ENCODE measurements at regions of chr9 and their contacts with region 1.

Region 1: GRCh38 chr9:123349691-123350480 is 6.1 kb upstream of the CRB2 start:
- DNase-seq: no peak
- ATAC-seq: peak; percentile 79 to 92 (median 86)
- H3K4me3 ChIP-seq: no peak overlapping the region
- H3K27ac ChIP-seq: no peak overlapping the region
- H3K4me1 ChIP-seq: peaks cover 7% of the 10 kb centered on the region
- H3K27me3 ChIP-seq: peaks cover 0 to 3% (median 0%) of the 10 kb centered on the region in 3 donors
- CTCF ChIP-seq: peak; percentile 95

Region 2: DNA sequence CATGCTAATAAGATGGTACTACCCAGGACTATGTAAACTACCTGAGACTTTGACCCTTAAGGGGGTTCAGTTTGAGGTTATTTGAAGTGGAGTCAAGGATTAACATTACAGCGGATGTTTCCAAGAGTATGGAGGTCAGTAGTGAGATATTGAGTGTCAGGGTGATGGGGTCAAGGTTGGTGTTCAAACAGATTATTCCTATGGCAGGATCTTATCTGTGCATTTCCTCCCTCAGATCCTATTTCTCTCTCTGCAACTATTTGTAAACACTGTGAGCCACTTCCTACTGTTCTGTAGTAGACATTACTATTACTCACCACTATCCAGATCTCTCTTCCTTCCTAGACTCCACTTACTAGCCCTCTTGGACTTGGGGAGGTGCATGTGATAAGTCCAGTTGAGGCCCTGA is 1925.9 kb before region 1 on chr9:
- intact Hi-C with region 1: no loop called
- DNase-seq: no peak
- ATAC-seq: no peak
- H3K4me3 ChIP-seq: no peak overlapping the region
- H3K27ac ChIP-seq: no peak overlapping the region
- H3K4me1 ChIP-seq: no peaks in the 10 kb centered on the region
- H3K27me3 ChIP-seq: no peaks in the 10 kb centered on the region
- CTCF ChIP-seq: no peak

Region 3: GRCh38 chr9:123087359-123087888 is 262.5 kb before region 1 on chr9:
- intact Hi-C with region 1: loop called in 1 of 2 experiments (anchors 2 kb)
- DNase-seq: no peak
- ATAC-seq: peak; percentile 59 to 78 (median 70)
- H3K4me3 ChIP-seq: no peak overlapping the region
- H3K27ac ChIP-seq: no peak overlapping the region
- H3K4me1 ChIP-seq: no peaks in the 10 kb centered on the region
- H3K27me3 ChIP-seq: no peaks in the 10 kb centered on the region
- CTCF ChIP-seq: no peak

Region 4: GRCh38 chr9:123107639-123108285 is 242.1 kb before region 1 on chr9:
- intact Hi-C with region 1: loop called in 1 of 2 experiments (anchors 5 kb)
- DNase-seq: no peak
- ATAC-seq: no peak
- H3K4me3 ChIP-seq: no peak overlapping the region
- H3K27ac ChIP-seq: no peak overlapping the region
- H3K4me1 ChIP-seq: peaks cover 7% of the 10 kb centered on the region
- H3K27me3 ChIP-seq: no peaks in the 10 kb centered on the region
- CTCF ChIP-seq: no peak

Region 5: GRCh38 chr9:123120131-123120530 is 229.8 kb before region 1 on chr9:
- intact Hi-C with region 1: loop called in 1 of 2 experiments (anchors 10 kb)
- DNase-seq: no peak
- ATAC-seq: no peak
- H3K4me3 ChIP-seq: no peak overlapping the region
- H3K27ac ChIP-seq: no peak overlapping the region
- H3K4me1 ChIP-seq: peaks cover 8% of the 10 kb centered on the region
- H3K27me3 ChIP-seq: no peaks in the 10 kb centered on the region
- CTCF ChIP-seq: no peak

Region 6: GRCh38 chr9:123395276-123395688 is 45.4 kb after region 1 on chr9:
- intact Hi-C with region 1: no loop called
- DNase-seq: no peak
- ATAC-seq: no peak
- H3K4me3 ChIP-seq: no peak overlapping the region
- H3K27ac ChIP-seq: no peak overlapping the region
- H3K4me1 ChIP-seq: no peaks in the 10 kb centered on the region
- H3K27me3 ChIP-seq: no peaks in the 10 kb centered on the region
- CTCF ChIP-seq: no peak